HCT116 (cell line): ENCODE measurements at regions of chr6 and their contacts with region 1.

Region 1: DNA sequence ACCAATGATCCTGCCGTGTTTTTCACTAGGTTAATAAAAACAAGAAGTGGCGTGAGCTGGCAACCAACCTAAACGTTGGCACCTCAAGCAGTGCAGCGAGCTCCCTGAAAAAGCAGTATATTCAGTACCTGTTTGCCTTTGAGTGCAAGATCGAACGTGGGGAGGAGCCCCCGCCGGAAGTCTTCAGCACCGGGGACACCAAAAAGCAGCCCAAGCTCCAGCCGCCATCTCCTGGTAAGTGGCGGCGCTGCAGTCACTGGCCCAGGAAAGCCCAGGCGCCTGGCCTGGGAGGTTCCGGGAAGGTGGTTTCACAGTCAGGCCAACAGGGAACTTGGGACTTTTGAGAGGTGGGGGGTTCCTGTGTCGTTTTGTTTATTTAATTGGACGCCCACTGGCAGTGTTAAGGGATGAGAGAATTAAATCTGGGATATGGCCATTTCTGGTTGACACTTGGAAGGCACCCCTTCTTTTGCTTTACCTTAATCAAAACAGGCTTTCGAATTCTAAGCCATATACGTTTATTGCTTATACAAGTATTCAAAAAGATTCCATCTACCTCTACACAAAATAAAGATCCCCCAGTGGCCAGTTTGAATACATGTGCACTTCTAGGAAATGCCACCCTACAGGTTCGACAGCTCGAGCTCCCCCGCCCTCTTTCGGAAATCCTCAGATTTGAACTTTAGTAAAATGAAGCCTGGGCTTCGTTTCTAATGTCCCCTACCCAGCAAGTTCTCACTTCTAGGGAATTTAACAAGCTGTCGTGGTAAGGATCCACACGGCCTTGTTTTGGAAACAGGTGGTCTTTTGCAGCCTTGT is 138.9 kb downstream of the TMEM242 start:
- DNase-seq: peak; percentile 16
- ATAC-seq: peak; percentile 93
- H3K4me3 ChIP-seq: no peak overlapping the region
- H3K27ac ChIP-seq: no peak overlapping the region
- H3K4me1 ChIP-seq: peaks cover 12 to 23% of the 10 kb centered on the region in 2 experiments; a peak in 3 of 4 replicates
- H3K27me3 ChIP-seq: no peaks in the 10 kb centered on the region
- CTCF ChIP-seq: peak; percentile 84 to 94 (median 93)
- POLR2A ChIP-seq: no peak
- RAD21 ChIP-seq: peak; percentile 94

Region 2: GRCh38 chr6:156175971-156176421 is 1008.4 kb before region 1 on chr6:
- CTCF ChIA-PET with region 1: no interaction called
- POLR2A ChIA-PET with region 1: no interaction called
- RAD21 ChIA-PET with region 1: no interaction called
- intact Hi-C with region 1: loop called (anchors 10 kb)
- DNase-seq: peak; percentile 38
- ATAC-seq: peak; percentile 91
- H3K4me3 ChIP-seq: no peak overlapping the region
- H3K27ac ChIP-seq: no peak overlapping the region
- H3K4me1 ChIP-seq: no peaks in the 10 kb centered on the region
- H3K27me3 ChIP-seq: no peaks in the 10 kb centered on the region
- CTCF ChIP-seq: peak; percentile 31 to 56 (median 42); a peak in 4 of 6 replicates
- POLR2A ChIP-seq: no peak
- RAD21 ChIP-seq: peak; percentile 56

Region 3: GRCh38 chr6:156776840-156777576 is 407.4 kb before region 1 on chr6 and contains the start of gene ARID1B:
- CTCF ChIA-PET with region 1: no interaction called
- POLR2A ChIA-PET with region 1: no interaction called
- RAD21 ChIA-PET with region 1: no interaction called
- intact Hi-C with region 1: loop called (anchors 5 kb)
- DNase-seq: no peak
- ATAC-seq: peak; percentile 50
- H3K4me3 ChIP-seq: peak within 1 kb of the TSS; percentile 70 to 77
- H3K27ac ChIP-seq: peak within 1 kb of the TSS; percentile 95
- H3K4me1 ChIP-seq: peaks cover 27 to 40% of the 10 kb centered on the region in 2 experiments
- H3K27me3 ChIP-seq: no peaks in the 10 kb centered on the region
- CTCF ChIP-seq: no peak
- POLR2A ChIP-seq: peak; percentile 58
- RAD21 ChIP-seq: no peak
- total RNA-seq, gene ARID1B: 35.6 TPM

Region 4: GRCh38 chr6:157034436-157035230 is 149.8 kb before region 1 on chr6:
- CTCF ChIA-PET with region 1: no interaction called
- POLR2A ChIA-PET with region 1: no interaction called
- RAD21 ChIA-PET with region 1: no interaction called
- intact Hi-C with region 1: loop called (anchors 1 kb)
- DNase-seq: peak; percentile 36
- ATAC-seq: peak; percentile 73
- H3K4me3 ChIP-seq: no peak overlapping the region
- H3K27ac ChIP-seq: no peak overlapping the region
- H3K4me1 ChIP-seq: 0 out of 4 replicates have a peak, but pooled peaks cover 0 to 3% of the 10 kb centered on the region in 2 experiments
- H3K27me3 ChIP-seq: no peaks in the 10 kb centered on the region
- CTCF ChIP-seq: peak; percentile 60 to 61 (median 61); a peak in 5 of 6 replicates
- POLR2A ChIP-seq: no peak
- RAD21 ChIP-seq: peak; percentile 70

Region 5: DNA sequence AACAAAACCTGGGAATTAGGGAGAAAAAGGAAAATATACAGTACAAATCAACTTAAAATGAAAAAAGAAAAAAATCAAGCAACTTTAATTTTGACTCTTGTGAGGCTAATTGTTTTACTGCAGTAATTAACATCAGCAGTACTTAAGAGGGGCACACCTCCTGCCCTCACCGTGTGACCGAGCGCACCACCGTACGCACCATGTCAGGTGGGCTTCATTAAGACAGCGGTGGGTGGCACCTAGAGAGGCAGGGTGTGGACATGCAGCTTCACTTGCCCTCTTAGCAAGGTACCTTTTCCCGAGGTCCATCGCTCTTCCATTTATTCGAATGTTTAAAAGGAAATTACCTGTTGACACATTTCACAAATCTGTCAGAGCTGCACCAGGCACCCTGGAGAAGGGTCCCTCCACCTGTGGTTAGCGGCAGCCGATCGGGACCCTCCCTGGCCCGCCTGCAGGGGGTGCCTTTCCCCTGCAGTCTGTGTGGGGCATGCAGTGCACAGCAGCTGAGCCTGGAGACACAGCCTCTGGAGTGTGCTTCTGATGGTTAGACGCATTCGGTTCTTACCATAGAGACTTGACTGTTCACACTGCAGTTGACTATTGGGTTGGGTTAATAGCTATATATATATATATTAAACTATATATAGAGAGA is 45.2 kb before region 1 on chr6:
- CTCF ChIA-PET with region 1: interaction called, 3 read pairs
- POLR2A ChIA-PET with region 1: no interaction called
- RAD21 ChIA-PET with region 1: no interaction called
- intact Hi-C with region 1: loop called (anchors 2 kb)
- DNase-seq: no peak
- ATAC-seq: peak; percentile 80
- H3K4me3 ChIP-seq: no peak overlapping the region
- H3K27ac ChIP-seq: no peak overlapping the region
- H3K4me1 ChIP-seq: no peaks in the 10 kb centered on the region
- H3K27me3 ChIP-seq: no peaks in the 10 kb centered on the region
- CTCF ChIP-seq: peak; percentile 30 to 51 (median 50); a peak in 5 of 6 replicates
- POLR2A ChIP-seq: no peak
- RAD21 ChIP-seq: peak; percentile 55

Region 6: GRCh38 chr6:157169656-157170055 is 14.8 kb before region 1 on chr6:
- CTCF ChIA-PET with region 1: no interaction called
- POLR2A ChIA-PET with region 1: no interaction called
- RAD21 ChIA-PET with region 1: no interaction called
- intact Hi-C with region 1: no loop called
- DNase-seq: no peak
- ATAC-seq: no peak
- H3K4me3 ChIP-seq: no peak overlapping the region
- H3K27ac ChIP-seq: no peak overlapping the region
- H3K4me1 ChIP-seq: no peaks in the 10 kb centered on the region
- H3K27me3 ChIP-seq: no peaks in the 10 kb centered on the region
- CTCF ChIP-seq: no peak
- POLR2A ChIP-seq: no peak
- RAD21 ChIP-seq: no peak